Cardiac septum (tissue), 1 donor: ENCODE measurements at regions of chr11 and their contacts with region 1.

Region 1: DNA sequence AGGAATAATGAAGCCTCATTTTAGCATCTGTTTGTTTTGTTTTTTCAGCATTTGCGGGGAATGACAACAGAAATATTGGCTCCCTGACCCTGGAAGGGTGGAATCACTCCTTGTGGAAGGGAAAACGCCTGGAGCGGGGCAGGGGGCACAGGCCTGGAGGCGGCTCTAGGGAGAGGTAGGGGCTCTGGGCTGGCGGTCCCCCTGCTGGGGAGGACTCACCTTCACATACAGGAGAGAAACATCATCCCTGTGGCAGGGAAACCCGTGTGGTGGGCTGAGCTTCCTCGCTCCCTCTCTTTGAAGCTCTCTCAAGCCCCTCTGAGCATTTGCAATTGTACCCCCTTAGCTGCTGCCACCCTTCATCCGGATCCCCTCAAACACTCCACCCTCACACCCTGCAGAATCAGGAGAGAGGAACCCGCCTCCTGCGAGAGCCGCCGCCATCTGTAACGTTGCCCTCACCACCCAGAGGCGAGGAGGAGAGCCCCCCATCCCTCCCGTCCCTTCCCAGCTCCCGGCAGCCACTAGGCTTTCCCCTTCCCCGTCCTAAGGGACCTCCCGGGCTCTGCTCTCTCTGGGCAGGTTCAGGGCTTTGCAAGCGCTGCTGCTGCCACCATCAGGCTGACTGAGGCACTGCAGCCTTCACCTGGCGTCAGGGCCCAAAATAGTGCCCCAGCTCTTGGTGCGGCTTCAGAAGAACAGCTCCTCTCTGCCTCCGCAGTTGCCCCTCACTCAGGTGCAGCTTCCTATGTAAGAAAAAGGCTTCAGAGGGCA is 10.4 kb downstream of the KIRREL3 start:
- DNase-seq: peak; percentile 78

Region 2: DNA sequence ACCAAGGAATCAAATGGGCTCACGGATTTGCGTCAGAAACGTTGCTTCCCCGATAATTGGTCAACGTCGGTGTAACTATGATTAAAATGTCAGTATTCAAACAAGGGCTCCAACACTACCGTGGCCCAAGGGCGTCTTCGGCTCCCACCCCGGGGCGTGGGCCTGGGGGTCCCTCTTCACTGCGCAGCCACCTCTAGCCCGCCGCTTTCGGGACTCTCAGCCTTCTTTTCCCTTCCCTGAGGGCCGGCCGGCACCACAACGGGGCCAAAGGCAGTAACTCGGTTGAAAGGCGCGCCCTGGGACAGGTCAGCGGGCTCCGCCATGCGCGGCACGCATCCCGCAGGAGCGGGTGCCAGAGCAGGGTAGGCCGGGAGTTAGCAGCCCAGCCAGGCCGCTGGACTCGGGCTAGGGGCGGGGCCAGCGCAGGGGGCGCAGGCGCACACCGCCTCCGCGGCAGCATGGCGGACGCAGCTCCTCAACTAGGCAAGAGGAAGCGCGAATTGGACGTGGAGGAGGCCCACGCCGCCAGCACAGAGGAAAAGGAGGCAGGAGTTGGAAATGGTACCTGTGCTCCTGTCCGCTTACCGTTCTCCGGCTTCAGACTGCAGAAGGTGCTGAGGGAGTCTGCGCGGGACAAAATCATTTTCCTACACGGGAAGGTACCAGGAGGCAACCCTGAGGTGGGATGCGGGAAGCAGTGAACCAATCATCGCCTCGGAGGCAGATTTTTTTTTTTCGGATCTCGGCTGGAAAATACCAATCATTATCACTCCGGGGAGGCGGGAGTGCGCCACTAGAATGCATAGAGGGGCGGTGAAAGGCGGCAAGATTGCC is 686.3 kb before region 1 on chr11 and contains the start of gene DCPS:
- intact Hi-C with region 1: loop called (anchors 10 kb)
- DNase-seq: peak; percentile 97
- total RNA-seq, gene DCPS: 9.9 TPM

Region 3: DNA sequence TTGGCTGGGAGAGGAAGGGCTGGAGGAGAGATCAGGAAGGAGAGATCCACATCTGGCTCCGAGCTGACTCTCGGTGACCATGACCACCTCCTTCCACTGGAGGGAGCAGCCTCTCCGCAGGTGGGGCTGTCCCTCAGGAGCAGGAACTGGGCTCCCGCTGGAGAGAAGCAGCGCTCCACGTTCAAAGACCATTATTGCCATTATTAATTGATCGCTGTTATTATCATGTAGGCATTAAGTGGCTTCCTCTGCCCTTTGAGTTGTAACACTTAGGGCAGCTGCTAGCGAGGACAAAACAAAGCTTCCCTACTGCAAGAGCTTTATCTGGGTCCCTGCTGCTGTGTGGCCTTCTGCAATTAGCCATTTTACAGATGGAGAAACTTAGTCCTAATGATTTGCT is 382.8 kb before region 1 on chr11:
- intact Hi-C with region 1: loop called (anchors 5 kb)
- DNase-seq: no peak

Region 4: GRCh38 chr11:126716456-126717083 is 273.6 kb before region 1 on chr11:
- intact Hi-C with region 1: loop called (anchors 10 kb)
- DNase-seq: peak; percentile 71

Region 5: GRCh38 chr11:126839496-126839895 is 150.6 kb before region 1 on chr11:
- intact Hi-C with region 1: no loop called
- DNase-seq: no peak